HepG2 (cell line): ENCODE measurements at regions of chr2 and their contacts with region 1.

Region 1: DNA sequence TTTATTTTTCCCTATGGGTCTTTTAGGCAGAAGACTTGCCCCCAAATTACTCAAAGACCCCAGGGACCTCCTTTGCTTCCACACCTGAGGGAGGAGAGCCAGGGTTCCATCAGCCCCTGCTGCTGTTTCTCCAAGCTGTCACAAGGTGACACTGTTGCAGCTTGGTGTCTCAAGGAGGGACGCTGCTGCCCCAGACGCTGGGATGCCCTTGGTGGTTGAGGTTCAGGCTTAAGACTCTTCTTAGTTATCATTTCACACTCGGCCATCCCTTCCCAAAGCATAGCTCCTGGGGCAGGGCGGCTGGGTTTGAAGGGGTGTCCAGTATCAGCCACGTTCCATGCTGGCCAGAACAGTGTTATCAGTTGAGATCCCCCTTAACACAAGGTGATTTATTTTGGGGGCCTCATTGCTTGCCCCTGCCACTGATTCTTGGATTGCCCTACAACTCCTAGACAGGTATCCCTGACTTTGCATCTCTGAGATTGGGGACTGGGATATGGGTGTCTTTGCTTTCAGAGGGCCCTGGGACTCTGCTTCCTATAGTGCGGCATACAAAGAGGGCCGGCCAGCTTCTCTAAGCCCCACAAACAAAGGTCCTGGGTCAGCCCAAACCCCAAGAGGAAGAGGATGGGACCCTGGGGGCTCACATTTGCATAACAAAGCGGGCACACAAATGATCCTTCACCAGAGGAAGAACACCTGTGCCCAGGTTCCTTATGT is 22.7 kb downstream of the GPR55 start:
- DNase-seq: peak; percentile 56
- ATAC-seq: peak; percentile 64
- H3K4me3 ChIP-seq: no peak overlapping the region
- H3K27ac ChIP-seq: no peak overlapping the region
- H3K4me1 ChIP-seq: peaks cover 12% of the 10 kb centered on the region
- H3K27me3 ChIP-seq: peaks cover 6 to 66% of the 10 kb centered on the region in 2 experiments
- CTCF ChIP-seq: peak; percentile 92
- EP300 ChIP-seq: no peak
- POLR2A ChIP-seq: no peak
- RAD21 ChIP-seq: peak; percentile 76

Region 2: DNA sequence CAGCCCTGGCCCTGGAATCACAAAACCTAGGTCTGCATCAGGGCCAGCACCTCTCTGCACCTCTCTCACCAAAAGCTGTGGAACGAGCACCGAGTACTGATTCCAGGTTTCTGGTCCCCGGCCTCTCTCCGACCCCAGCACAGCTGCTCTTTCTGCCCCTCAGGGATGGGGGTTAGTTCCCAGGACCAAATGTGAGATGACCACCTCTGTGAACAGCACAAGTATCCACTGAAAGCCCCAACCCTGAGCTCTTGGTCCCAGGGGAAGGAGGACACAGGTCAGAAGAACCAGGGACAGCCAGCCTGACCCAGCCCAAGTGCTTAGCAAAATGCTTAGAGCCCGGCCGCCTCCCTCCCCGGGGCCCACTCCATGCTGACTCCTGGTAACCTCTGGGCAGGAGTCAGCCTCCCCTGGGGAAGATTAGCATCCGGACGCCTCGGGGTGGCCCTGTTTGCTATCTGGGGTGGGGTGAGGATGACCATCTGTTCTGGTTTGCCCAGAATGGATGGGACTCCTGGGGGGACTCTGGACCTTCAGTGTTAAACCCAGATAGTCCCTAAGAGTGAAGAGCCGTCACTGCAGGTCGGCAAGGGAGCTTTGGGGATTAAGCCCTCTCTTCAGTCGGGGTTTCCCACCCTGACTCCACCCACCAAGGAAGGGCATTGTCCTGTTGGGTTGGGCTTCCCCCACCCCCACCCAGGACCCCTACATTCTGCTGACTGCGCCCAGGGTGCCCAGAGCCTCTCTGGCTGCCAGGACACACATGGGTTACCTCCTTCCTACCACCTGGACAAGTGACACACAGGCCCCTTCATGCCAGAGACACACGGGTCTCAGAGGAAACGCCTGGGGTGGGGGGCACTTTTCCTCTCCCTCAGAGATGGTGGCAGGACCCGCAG is 32.1 kb after region 1 on chr2:
- CTCF ChIA-PET with region 1: no interaction called
- POLR2A ChIA-PET with region 1: no interaction called
- in situ Hi-C with region 1: no loop called
- intact Hi-C with region 1: loop called (anchors 5 kb)
- DNase-seq: no peak
- ATAC-seq: no peak
- H3K4me3 ChIP-seq: no peak overlapping the region
- H3K27ac ChIP-seq: no peak overlapping the region
- H3K4me1 ChIP-seq: no peaks in the 10 kb centered on the region
- H3K27me3 ChIP-seq: peaks cover 8 to 85% of the 10 kb centered on the region in 2 experiments; a peak in 4 of 5 replicates
- CTCF ChIP-seq: no peak
- EP300 ChIP-seq: no peak
- POLR2A ChIP-seq: no peak
- RAD21 ChIP-seq: no peak